A549 (cell line): ENCODE measurements at regions of chr5 and their contacts with region 1.

Region 1: GRCh38 chr5:150320048-150320555 is 17.4 kb upstream of the ARSI start:
- DNase-seq: peak; percentile 50 to 68
- ATAC-seq: peak; percentile 20 to 32; a peak in 5 of 6 replicates
- H3K4me3 ChIP-seq: no peak overlapping the region
- H3K27ac ChIP-seq: peak overlapping the region; percentile 91 to 97
- H3K4me1 ChIP-seq: peaks cover 60% of the 10 kb centered on the region
- CTCF ChIP-seq: no peak
- EP300 ChIP-seq: peak in 1 of 2 experiments; percentile 23; a peak in 1 of 5 replicates
- POLR2A ChIP-seq: no peak
- RAD21 ChIP-seq: no peak

Region 2: GRCh38 chr5:150302301-150303069 is 17.6 kb before region 1 on chr5 and contains the start of gene ARSI:
- CTCF ChIA-PET with region 1: interaction called, 12 read pairs
- POLR2A ChIA-PET with region 1: interaction called, 5 read pairs
- DNase-seq: peak; percentile 62 to 85
- ATAC-seq: peak; percentile 77 to 91
- H3K4me3 ChIP-seq: peak within 1 kb of the TSS; percentile 58
- H3K27ac ChIP-seq: peak within 1 kb of the TSS; percentile 87 to 90
- H3K4me1 ChIP-seq: peaks cover 66% of the 10 kb centered on the region
- CTCF ChIP-seq: peak; percentile 59
- EP300 ChIP-seq: no peak
- POLR2A ChIP-seq: no peak
- RAD21 ChIP-seq: peak; percentile 28 to 47; a peak in 4 of 5 replicates
- polyA plus RNA-seq, gene ARSI: 2.9 and 3.2 TPM in 2 replicates